Heart right ventricle (tissue), 16 donors: ENCODE measurements at regions of chr14 and their contacts with region 1.

Region 1: DNA sequence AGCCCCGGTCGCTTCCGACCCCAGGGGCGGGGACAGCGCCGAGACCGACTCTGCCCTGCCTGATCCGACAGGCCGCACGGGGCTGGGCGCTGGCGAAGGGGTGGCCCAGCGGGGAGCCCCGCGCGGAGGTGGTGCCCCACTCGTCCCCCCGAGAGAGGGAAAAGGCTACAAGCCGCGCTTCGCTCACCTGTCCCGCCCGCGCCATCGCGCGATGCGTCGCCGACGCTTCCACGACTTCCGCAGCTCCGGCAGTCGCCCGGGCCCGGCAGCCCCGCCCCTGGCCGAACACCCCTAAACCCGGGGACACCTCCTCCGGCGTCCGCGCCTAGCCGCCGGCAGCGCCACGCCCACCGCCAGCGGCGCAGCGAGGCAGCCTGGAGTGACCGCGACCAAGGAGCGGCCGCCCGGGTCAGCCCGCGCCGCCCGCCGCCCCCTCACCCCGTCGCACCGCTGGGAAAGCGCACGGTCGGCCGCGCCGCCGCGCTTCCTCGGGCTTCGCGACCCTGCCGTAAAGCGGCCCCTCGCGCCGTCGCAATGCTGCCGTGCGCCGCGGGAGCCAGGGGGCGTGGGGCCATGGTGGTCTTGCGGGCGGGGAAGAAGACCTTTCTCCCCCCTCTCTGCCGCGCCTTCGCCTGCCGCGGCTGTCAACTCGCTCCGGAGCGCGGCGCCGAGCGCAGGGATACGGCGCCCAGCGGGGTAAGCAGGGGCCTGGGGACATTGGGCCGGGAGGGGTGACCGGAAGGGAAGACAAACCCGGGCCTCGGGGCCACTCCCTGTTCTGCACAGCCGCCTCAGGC is at the starts of genes BAG5 and COA8:
- DNase-seq: peak; percentile 86 to 87
- ATAC-seq: peak; percentile 74 to 91 (median 82)
- H3K4me3 ChIP-seq: peak within 1 kb of the TSS; percentile 92 to 100 (median 99)
- H3K27ac ChIP-seq: peak within 1 kb of the TSS; percentile 92 to 100 (median 98)
- H3K4me1 ChIP-seq: peaks cover 10 to 83% (median 58%) of the 10 kb centered on the region in 9 donors
- H3K27me3 ChIP-seq: no peaks in the 10 kb centered on the region
- CTCF ChIP-seq: peak in 3 of 9 donors; percentile 24 to 37 (median 30)
- total RNA-seq, gene BAG5: 14.0 to 19.7 (median 16.8) TPM
- total RNA-seq, gene COA8: 33.3 to 53.9 (median 40.3) TPM

Region 2: DNA sequence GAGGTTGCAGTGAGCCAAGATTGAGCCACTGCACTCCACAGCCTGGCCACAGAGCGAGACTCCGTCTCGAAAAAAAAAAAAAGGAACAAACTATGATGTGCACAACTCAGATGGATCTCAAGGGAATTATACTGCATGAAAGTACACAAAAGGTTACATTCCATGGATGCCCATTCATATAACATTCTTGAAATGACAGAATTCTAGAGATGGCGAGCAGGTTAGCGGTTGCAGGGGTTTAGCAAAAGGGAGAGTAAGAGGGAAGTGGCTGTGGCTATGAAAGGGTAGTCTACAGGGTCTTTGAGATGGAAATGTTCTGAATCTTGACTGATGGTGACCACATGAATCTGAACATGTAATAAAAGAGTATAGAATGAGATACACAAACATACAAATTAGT is 89.7 kb before region 1 on chr14:
- intact Hi-C with region 1: no loop called
- DNase-seq: no peak
- ATAC-seq: no peak
- H3K4me3 ChIP-seq: no peak overlapping the region
- H3K27ac ChIP-seq: no peak overlapping the region
- H3K4me1 ChIP-seq: no peaks in the 10 kb centered on the region
- H3K27me3 ChIP-seq: no peaks in the 10 kb centered on the region
- CTCF ChIP-seq: no peak

Region 3: DNA sequence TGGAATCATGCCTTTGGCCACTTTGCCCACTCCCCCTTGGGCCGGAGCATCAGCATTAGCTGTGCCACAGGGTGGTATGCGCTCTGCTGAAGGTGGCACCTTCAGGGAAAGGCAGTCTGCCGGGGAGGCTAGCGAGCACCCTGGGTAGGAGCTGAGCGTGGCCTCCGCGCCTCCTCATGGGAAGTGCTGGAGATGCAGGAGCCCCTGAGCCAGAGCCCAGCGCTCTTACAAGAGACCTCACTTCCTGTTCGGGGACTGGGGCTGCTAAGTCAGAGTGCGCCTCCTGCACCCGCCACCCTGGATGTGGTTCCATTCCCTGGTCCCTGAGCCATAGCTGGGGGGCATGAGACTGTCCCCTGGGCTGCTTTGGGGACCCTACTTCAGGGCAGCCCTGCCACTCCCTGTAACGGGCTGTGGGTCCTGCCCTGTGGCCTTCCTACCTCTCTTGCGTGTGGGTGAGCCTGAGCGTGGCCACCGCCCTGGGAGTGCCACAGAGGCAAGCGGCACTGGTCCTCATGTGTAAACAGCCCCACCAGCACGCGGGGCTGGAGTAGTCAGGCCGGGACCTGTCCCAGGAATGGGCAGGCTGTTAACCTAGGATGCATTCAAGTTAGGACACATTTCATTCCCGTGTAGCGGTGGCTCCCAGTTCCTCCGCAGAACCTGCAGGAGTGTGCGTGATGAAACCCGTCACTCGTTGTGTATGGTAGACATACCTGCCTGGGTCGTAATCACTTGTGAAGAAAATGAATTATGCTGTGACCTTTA is 19.5 kb after region 1 on chr14:
- intact Hi-C with region 1: no loop called
- DNase-seq: no peak
- ATAC-seq: peak in 4 of 8 donors; percentile 16 to 33 (median 18)
- H3K4me3 ChIP-seq: no peak overlapping the region
- H3K27ac ChIP-seq: no peak overlapping the region
- H3K4me1 ChIP-seq: peaks cover 0 to 4% (median 2%) of the 10 kb centered on the region in 9 donors
- H3K27me3 ChIP-seq: no peaks in the 10 kb centered on the region
- CTCF ChIP-seq: no peak

Region 4: GRCh38 chr14:103688906-103689902 is 126.6 kb after region 1 on chr14:
- intact Hi-C with region 1: loop called in 1 of 10 experiments (anchors 10 kb)
- DNase-seq: no peak
- ATAC-seq: peak; percentile 48 to 73 (median 62)
- H3K4me3 ChIP-seq: no peak overlapping the region
- H3K27ac ChIP-seq: peak overlapping the region in 3 of 10 donors; percentile 3 to 56 (median 17)
- H3K4me1 ChIP-seq: peaks cover 0 to 61% (median 31%) of the 10 kb centered on the region in 9 donors
- H3K27me3 ChIP-seq: no peaks in the 10 kb centered on the region
- CTCF ChIP-seq: no peak

Region 5: GRCh38 chr14:103910262-103910935 is 347.8 kb after region 1 on chr14:
- intact Hi-C with region 1: loop called in 2 of 10 experiments (anchors 10 kb)
- DNase-seq: peak; percentile 71 to 82
- ATAC-seq: peak; percentile 83 to 97 (median 95)
- H3K4me3 ChIP-seq: peak overlapping the region in 4 of 10 donors; percentile 19 to 34 (median 23)
- H3K27ac ChIP-seq: peak overlapping the region in 6 of 10 donors; percentile 4 to 53 (median 38)
- H3K4me1 ChIP-seq: peaks cover 0 to 14% (median 12%) of the 10 kb centered on the region in 9 donors
- H3K27me3 ChIP-seq: no peaks in the 10 kb centered on the region
- CTCF ChIP-seq: peak; percentile 76 to 91 (median 81)

Region 6: DNA sequence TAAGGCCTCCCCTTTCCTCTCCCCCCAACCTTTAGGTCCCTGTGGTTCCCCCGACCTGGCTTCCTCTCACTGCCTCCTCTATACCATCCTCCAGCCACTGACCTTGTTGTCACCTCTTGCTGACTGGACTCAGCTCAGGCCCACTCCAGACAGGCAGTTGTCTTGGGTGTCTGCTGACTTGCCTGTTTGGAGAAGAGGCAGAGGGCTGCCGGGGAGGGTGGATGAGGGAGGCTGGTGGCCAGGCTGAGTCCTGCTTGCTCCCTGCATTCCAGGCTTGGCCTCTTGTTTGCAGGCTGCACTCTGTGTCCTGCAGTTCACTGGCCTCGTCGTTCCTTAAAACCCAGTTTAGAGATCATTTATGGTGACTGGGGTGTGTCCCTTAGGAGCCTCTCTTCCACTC is 410.7 kb after region 1 on chr14:
- intact Hi-C with region 1: loop called in 1 of 10 experiments (anchors 10 kb)
- DNase-seq: no peak
- ATAC-seq: peak in 5 of 8 donors; percentile 8 to 57 (median 33)
- H3K4me3 ChIP-seq: no peak overlapping the region
- H3K27ac ChIP-seq: no peak overlapping the region
- H3K4me1 ChIP-seq: no peaks in the 10 kb centered on the region
- H3K27me3 ChIP-seq: no peaks in the 10 kb centered on the region
- CTCF ChIP-seq: no peak